ENCODE measurements at regions of chr1 and their contacts with region 1.

Region 1: DNA sequence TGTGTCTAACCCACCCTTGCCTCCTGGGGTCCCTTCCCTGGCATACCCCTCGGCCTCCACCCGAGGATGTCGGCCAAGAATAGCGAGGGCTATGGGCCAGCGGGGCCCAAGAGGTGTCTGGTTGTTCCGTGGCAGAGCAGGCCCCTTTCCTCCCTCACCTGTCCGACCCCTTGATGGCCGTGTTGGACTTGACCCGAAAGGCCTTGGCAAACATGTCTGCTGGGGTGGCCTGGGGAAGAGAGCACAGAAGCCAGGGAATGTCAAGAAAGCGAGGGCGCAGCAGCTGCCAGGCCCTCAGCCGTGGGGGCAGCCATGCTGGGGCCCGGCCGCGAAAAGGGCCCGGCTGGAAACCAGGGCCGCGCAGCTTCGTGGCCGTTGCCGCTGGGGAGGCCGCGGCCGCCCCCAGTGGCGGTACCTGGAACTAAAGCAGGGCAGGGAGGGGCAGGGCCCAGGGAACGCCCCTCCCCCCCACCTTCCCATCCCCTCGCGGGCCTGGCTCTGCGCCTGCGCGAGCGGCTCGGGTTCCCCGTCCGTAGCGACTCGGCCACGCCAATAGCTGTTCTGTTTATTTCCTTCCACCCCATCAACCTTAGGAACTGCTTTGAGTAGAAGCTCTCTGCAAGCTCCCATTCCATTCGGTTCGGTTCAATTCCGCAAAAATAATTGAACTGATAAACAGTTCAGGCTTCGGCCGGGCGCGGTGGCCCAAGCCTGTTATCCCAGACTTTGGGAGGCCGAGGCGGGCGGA is at the start of gene EIF2D:
- DNase-seq: no peak
- H3K4me3 ChIP-seq: peak within 1 kb of the TSS; percentile 95
- CTCF ChIP-seq: peak; percentile 99

Region 2: GRCh38 chr1:206590025-206590758 is 22.1 kb before region 1 on chr1:
- CTCF ChIA-PET with region 1: interaction called, 136 read pairs
- POLR2A ChIA-PET with region 1: no interaction called
- DNase-seq: peak; percentile 41
- H3K4me3 ChIP-seq: no peak overlapping the region
- CTCF ChIP-seq: no peak

Region 3: DNA sequence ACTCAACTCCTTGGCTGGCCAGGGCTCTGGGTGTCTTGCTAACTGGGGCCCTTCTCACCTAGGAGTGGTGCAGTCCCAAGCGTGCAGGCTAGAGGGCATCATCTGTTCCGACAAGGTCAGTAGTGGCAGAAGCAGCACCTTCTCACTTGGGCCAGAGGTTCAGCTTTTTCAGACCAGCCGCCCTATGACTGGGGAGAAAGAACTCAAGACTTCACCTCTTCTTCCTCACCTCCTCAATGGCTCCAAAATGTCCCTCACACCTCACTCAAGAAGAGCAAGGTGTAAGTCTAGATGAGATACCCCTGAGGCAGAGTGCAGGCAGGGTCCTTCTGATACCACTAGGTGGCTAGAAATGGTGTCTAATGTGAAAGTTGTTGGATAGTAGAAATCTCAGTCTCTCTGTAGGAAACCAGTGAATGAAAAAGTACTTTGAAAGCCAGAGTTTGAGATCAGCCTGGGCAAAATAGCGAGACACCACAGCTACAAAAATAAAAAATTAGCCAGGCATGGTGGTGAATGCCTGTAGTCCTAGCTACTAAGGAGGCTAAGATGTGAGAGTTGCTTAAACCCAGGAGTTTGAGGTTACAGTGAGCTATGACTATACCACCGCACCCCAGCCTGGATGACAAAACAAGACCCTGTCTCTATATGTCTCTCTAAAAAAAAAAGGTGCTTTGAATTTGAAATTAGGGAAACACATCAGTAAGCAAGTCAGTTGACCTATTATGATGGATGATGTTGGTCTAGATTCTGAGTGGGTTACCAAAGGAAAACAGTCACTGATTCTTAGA is 244.6 kb after region 1 on chr1:
- CTCF ChIA-PET with region 1: no interaction called
- POLR2A ChIA-PET with region 1: no interaction called
- DNase-seq: no peak
- H3K4me3 ChIP-seq: no peak overlapping the region
- CTCF ChIP-seq: no peak